A673 (cell line): ENCODE measurements at regions of chr1 and their contacts with region 1.

Region 1: DNA sequence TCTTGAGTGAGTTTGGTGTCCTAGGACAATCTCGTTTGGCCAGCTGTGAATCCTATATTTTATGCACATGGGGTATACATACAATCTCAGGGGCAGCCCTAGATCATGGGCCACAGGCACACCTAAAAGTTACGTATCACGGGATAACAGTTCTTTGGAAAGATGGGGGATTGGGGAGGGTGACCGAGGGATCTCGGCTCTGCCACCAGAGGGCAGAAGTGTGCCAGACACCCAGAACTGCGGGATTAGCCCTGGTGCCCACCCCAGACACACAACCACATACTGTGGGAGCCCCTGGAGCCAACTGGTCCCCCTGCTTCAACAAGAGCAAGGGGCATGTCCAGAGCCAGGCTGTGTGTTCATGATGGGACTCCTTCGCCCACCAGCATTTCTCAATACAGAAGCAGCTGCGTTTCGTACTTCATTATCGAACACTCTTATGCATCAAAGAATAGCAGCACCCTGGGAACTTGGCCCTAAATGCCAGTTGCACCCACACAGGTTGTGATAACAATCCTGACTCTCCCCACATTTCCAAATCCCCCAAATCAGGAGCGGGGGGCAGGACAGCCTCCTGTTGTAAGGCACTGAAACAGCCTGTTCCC is 37.4 kb downstream of the TMCO4 start:
- DNase-seq: peak; percentile 67
- H3K4me3 ChIP-seq: no peak overlapping the region
- H3K27ac ChIP-seq: no peak overlapping the region
- H3K4me1 ChIP-seq: peaks cover 38% of the 10 kb centered on the region
- H3K27me3 ChIP-seq: no peaks in the 10 kb centered on the region
- CTCF ChIP-seq: peak; percentile 93

Region 2: GRCh38 chr1:19596714-19597495 is 165.4 kb before region 1 on chr1:
- CTCF ChIA-PET with region 1: no interaction called
- POLR2A ChIA-PET with region 1: no interaction called
- intact Hi-C with region 1: no loop called
- DNase-seq: peak; percentile 97
- H3K4me3 ChIP-seq: peak overlapping the region; percentile 85
- H3K27ac ChIP-seq: peak overlapping the region; percentile 89
- H3K4me1 ChIP-seq: peaks cover 16% of the 10 kb centered on the region
- H3K27me3 ChIP-seq: no peaks in the 10 kb centered on the region
- CTCF ChIP-seq: no peak

Region 3: GRCh38 chr1:19688041-19688842 is 74.0 kb before region 1 on chr1:
- CTCF ChIA-PET with region 1: no interaction called
- POLR2A ChIA-PET with region 1: no interaction called
- intact Hi-C with region 1: no loop called
- DNase-seq: no peak
- H3K4me3 ChIP-seq: no peak overlapping the region
- H3K27ac ChIP-seq: no peak overlapping the region
- H3K4me1 ChIP-seq: no peaks in the 10 kb centered on the region
- H3K27me3 ChIP-seq: no peaks in the 10 kb centered on the region
- CTCF ChIP-seq: no peak

Region 4: DNA sequence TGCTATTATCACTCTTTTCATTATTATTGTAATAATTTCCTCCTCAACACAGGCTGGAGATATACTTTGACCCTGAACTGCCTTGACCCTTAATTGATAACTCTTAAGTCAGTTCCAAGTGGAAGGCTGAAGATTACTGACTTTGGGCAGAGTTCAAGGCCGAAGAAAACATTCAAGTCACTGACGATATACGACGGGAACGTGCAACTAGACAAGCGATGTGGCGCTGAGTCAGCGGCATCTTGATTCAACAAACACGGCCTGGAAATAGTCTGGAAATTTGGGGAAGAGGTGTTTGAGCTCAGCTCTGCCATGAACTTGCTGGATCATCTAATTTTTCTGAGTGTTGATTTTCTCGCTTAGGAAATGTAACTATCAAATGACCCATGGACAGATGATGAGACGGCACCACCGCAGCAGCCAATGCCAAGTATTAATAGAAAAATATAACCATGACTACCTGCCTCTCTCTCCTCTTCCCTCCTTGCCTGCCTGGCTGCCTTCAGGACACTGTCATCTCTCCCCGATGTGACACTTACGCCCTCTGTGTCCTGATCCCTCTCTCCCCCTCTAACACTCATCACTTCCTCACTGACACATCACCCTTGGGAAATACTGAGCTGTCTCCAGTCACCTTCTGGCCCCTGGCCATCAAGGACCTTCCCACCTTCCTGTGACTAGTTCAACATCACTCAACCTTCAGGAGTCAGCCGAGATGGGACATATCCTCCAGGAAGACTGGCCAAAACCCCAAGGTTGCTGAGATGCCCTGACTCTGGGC is 12.0 kb before region 1 on chr1:
- CTCF ChIA-PET with region 1: no interaction called
- POLR2A ChIA-PET with region 1: no interaction called
- intact Hi-C with region 1: no loop called
- DNase-seq: no peak
- H3K4me3 ChIP-seq: no peak overlapping the region
- H3K27ac ChIP-seq: no peak overlapping the region
- H3K4me1 ChIP-seq: no peaks in the 10 kb centered on the region
- H3K27me3 ChIP-seq: no peaks in the 10 kb centered on the region
- CTCF ChIP-seq: no peak

Region 5: GRCh38 chr1:19799877-19800804 is 37.9 kb after region 1 on chr1 and contains the start of gene TMCO4:
- CTCF ChIA-PET with region 1: no interaction called
- POLR2A ChIA-PET with region 1: no interaction called
- intact Hi-C with region 1: loop called (anchors 5 kb)
- DNase-seq: peak; percentile 72
- H3K4me3 ChIP-seq: peak within 1 kb of the TSS; percentile 52
- H3K27ac ChIP-seq: peak within 1 kb of the TSS; percentile 73
- H3K4me1 ChIP-seq: peaks cover 10% of the 10 kb centered on the region
- H3K27me3 ChIP-seq: no peaks in the 10 kb centered on the region
- CTCF ChIP-seq: no peak
- total RNA-seq, gene TMCO4: 4.3 and 6.3 TPM in 2 replicates

Region 6: GRCh38 chr1:19811206-19811851 is 49.1 kb after region 1 on chr1:
- CTCF ChIA-PET with region 1: interaction called, 3 read pairs
- POLR2A ChIA-PET with region 1: no interaction called
- intact Hi-C with region 1: loop called (anchors 1 kb)
- DNase-seq: peak; percentile 70
- H3K4me3 ChIP-seq: no peak overlapping the region
- H3K27ac ChIP-seq: no peak overlapping the region
- H3K4me1 ChIP-seq: no peaks in the 10 kb centered on the region
- H3K27me3 ChIP-seq: no peaks in the 10 kb centered on the region
- CTCF ChIP-seq: peak; percentile 79

Region 7: DNA sequence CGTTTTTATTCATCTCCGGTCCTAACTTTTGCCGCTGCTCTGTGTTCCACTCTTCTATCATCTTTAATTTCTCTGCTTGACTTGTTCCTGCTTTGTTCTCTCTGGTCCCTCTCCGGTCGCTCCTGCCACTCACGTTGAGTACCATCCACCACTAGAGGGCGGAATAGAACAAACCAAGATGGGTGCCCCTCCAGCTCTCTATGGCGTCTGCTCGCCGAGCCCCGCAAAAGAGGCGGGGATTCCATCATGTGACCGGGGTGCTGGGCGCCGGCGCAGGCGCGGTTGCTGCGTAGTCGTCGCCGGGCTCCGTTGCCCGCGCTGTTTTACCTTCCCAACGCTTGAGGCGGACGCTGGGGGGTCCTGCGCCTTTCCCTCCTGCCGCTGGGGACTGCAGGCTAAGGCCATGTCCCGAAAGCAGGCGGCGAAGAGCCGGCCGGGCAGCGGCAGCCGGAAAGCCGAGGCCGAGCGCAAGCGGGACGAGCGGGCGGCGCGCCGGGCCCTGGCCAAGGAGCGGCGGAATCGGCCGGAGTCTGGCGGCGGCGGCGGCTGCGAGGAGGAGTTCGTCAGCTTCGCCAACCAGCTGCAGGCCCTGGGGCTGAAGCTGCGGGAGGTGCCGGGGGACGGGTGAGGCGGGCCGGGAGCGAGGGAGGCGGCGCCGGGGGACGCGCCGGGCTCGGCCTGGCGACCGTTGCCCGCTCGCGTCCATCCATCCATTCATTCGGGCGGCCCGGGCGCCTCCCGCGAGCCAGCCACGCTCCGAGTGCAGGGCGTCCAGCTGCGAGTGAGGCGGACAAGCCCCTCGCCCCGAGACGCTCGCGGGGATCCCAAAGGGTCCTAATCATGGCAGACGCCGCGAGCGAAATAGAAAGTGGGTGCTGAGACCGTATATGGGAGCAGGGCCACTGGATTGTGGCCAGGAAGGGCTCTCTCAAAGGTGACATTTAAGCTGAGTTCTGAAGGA is 120.1 kb after region 1 on chr1 and contains the start of gene OTUD3:
- CTCF ChIA-PET with region 1: no interaction called
- POLR2A ChIA-PET with region 1: interaction called, 3 read pairs
- intact Hi-C with region 1: loop called (anchors 2 kb)
- DNase-seq: peak; percentile 99
- H3K4me3 ChIP-seq: peak within 1 kb of the TSS; percentile 98
- H3K27ac ChIP-seq: peak within 1 kb of the TSS; percentile 95
- H3K4me1 ChIP-seq: peaks cover 21% of the 10 kb centered on the region
- H3K27me3 ChIP-seq: no peaks in the 10 kb centered on the region
- CTCF ChIP-seq: peak; percentile 96
- total RNA-seq, gene OTUD3: 32.8 and 33.9 TPM in 2 replicates

Region 8: DNA sequence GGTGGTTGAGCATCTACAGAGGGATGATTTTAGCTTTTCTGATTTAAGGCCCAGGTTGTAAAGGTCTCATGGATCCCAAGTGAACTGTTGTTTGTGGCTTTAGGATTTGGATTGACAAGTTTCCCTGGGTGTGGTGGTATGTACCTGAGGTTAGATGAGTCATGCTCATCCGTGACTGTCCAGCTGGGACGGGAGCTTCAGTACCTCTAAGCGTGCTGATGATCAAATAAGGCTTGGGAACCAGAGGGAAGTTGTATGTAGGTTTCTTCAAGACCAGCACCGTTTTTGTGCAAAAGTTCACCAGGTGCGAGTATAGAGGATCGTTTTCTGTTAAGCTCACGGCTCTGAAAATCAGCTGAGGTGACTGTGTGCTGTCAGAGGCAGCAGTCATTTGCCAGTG is 141.3 kb after region 1 on chr1:
- CTCF ChIA-PET with region 1: no interaction called
- POLR2A ChIA-PET with region 1: no interaction called
- intact Hi-C with region 1: no loop called
- DNase-seq: no peak
- H3K4me3 ChIP-seq: no peak overlapping the region
- H3K27ac ChIP-seq: no peak overlapping the region
- H3K4me1 ChIP-seq: no peaks in the 10 kb centered on the region
- H3K27me3 ChIP-seq: no peaks in the 10 kb centered on the region
- CTCF ChIP-seq: no peak

Region 9: GRCh38 chr1:20151906-20152598 is 389.8 kb after region 1 on chr1:
- CTCF ChIA-PET with region 1: no interaction called
- POLR2A ChIA-PET with region 1: no interaction called
- intact Hi-C with region 1: loop called (anchors 5 kb)
- DNase-seq: peak; percentile 82
- H3K4me3 ChIP-seq: peak overlapping the region; percentile 27
- H3K27ac ChIP-seq: no peak overlapping the region
- H3K4me1 ChIP-seq: no peaks in the 10 kb centered on the region
- H3K27me3 ChIP-seq: no peaks in the 10 kb centered on the region
- CTCF ChIP-seq: peak; percentile 92

Region 10: DNA sequence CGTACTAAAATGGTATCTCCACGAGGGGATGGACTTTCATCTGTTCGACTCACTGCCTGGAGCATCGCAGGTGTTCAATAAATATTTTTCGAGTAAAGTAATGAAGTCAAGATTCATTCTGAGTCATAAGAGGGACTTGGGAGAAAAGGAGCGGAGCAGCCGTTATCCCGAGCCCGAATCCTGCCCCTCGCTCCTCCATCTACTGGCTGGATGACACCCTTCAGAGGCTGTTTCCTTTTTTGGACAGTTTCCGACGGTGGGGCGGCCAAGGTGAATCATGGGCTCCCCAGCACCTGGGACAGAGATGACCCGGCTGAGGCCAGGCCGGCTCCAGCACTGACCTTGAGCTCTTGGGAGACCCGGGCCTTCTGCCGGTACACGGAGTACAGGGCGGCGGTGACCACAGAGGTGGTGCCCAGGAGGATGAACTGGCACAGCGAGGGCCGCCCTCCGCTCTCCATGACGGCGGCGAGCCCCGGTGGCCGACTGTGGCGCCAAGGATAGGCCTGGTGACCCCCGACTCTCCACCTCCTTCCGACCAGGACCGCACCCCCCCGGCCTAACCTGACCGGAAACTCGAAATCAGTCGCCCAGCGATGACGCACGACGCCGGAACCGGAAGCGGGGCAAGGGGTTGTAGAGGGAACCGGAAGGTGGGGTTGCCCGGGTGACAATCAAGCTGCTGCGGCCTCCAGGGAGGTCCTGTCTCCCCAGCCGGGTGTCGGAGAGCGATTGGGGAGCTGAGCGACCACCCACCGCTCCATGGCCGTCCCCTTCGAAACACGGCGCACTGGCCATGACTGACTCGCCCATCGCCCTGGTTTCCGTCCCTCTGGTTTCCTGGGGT is 745.5 kb after region 1 on chr1 and contains the start of gene MUL1:
- CTCF ChIA-PET with region 1: no interaction called
- POLR2A ChIA-PET with region 1: interaction called, 10 read pairs
- intact Hi-C with region 1: no loop called
- DNase-seq: peak; percentile 94
- H3K4me3 ChIP-seq: peak within 1 kb of the TSS; percentile 84
- H3K27ac ChIP-seq: peak within 1 kb of the TSS; percentile 73
- H3K4me1 ChIP-seq: peaks cover 13% of the 10 kb centered on the region
- H3K27me3 ChIP-seq: no peaks in the 10 kb centered on the region
- CTCF ChIP-seq: no peak
- total RNA-seq, gene MUL1: 20.1 and 21.6 TPM in 2 replicates